Endothelial cell of umbilical vein (primary cell): ENCODE measurements at regions of chr11 and their contacts with region 1.

Region 1: GRCh38 chr11:31521497-31522150 is 12.1 kb downstream of the ELP4 start:
- DNase-seq: no peak
- H3K4me3 ChIP-seq: no peak overlapping the region
- H3K27ac ChIP-seq: no peak overlapping the region
- H3K4me1 ChIP-seq: no peaks in the 10 kb centered on the region
- H3K27me3 ChIP-seq: no peaks in the 10 kb centered on the region
- CTCF ChIP-seq: no peak
- POLR2A ChIP-seq: no peak

Region 2: GRCh38 chr11:31555938-31556337 is 34.3 kb after region 1 on chr11:
- CTCF ChIA-PET with region 1: no interaction called
- POLR2A ChIA-PET with region 1: no interaction called
- dilution Hi-C with region 1: no loop called
- intact Hi-C with region 1: loop called (anchors 2 kb)
- DNase-seq: no peak
- H3K4me3 ChIP-seq: no peak overlapping the region
- H3K27ac ChIP-seq: no peak overlapping the region
- H3K4me1 ChIP-seq: peaks cover 9% of the 10 kb centered on the region
- H3K27me3 ChIP-seq: no peaks in the 10 kb centered on the region
- CTCF ChIP-seq: no peak
- POLR2A ChIP-seq: no peak